ENCODE measurements at regions of chr6 and their contacts with region 1.

Region 1: DNA sequence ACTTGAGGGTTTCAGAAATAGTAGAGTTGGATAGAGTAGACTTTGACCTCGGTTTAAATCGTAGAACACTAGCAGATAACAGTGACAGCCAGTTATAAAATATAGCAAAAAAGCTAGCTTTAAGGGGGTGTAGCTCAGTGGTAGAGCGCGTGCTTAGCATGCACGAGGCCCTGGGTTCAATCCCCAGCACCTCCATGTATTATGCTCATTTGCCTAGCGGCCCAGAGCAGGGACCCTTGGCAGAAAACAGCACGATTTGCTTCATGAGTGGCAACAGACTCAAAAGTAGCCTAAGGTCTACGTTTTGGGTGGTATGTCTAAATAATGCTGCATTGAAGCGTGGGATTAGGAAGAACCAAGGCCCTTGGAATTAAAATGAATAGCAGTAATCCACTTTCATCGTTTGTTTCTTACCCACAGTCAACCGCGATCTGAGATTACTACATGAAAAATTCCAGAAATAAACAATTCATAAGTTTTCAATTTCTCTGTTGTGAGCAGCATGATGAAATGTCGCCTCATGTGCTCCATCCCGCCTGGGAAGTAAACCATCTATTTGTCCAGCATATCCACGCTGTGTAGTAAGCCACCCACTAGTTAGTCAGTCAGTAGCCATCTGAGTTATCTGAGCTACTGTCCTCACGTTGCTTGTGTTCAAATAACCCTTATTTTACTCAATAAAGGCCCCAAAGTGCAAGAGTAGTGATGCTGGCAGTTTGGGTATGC is 184.9 kb downstream of the GPX5 start:
- DNase-seq: peak; percentile 55 to 97 (median 68)
- ATAC-seq: peak; percentile 87
- H3K4me3 ChIP-seq: peak overlapping the region; percentile 51
- H3K27ac ChIP-seq: peak overlapping the region; percentile 89
- H3K4me1 ChIP-seq: peaks cover 0 to 16% of the 10 kb centered on the region in 2 experiments; a peak in 3 of 5 replicates
- H3K27me3 ChIP-seq: no peaks in the 10 kb centered on the region
- CTCF ChIP-seq: 0 out of 6 replicates have a peak, but pooled peaks of 1 of the 3 experiments have one; percentile 1
- EP300 ChIP-seq: peak; percentile 59
- POLR2A ChIP-seq: no peak
- RAD21 ChIP-seq: peak in 1 of 2 experiments; percentile 27; a peak in 1 of 4 replicates

Region 2: DNA sequence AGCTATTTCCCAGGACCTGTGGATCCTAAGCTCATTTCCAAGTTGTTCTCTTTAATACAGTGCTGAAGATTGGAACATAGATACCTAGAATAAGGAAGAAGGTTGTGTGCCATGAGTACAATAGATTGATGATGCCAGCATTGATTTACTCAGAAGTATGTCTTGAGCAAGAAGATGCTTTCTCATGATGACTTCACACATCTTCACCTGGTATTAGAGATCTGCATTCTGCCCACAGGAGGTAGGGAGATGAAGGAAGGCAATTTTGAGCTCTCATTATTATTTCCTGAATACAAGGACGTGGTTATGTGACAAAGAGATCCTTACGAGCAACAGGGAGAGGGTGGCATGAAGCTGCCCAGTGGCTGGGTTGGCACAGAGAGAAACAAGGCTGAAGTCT is 650.2 kb before region 1 on chr6:
- CTCF ChIA-PET with region 1: no interaction called
- POLR2A ChIA-PET with region 1: no interaction called
- in situ Hi-C with region 1: no loop called
- intact Hi-C with region 1: no loop called
- DNase-seq: no peak
- ATAC-seq: no peak
- H3K4me3 ChIP-seq: no peak overlapping the region
- H3K27ac ChIP-seq: no peak overlapping the region
- H3K4me1 ChIP-seq: no peaks in the 10 kb centered on the region; a peak in 1 of 5 replicates
- H3K27me3 ChIP-seq: no peaks in the 10 kb centered on the region
- CTCF ChIP-seq: no peak
- EP300 ChIP-seq: no peak
- POLR2A ChIP-seq: no peak
- RAD21 ChIP-seq: no peak

Region 3: GRCh38 chr6:28695715-28696114 is 14.9 kb before region 1 on chr6:
- CTCF ChIA-PET with region 1: no interaction called
- POLR2A ChIA-PET with region 1: interaction called, 12 read pairs
- in situ Hi-C with region 1: no loop called
- intact Hi-C with region 1: no loop called
- DNase-seq: no peak
- ATAC-seq: no peak
- H3K4me3 ChIP-seq: no peak overlapping the region
- H3K27ac ChIP-seq: no peak overlapping the region
- H3K4me1 ChIP-seq: peaks cover 6 to 7% of the 10 kb centered on the region in 2 experiments; a peak in 3 of 5 replicates
- H3K27me3 ChIP-seq: no peaks in the 10 kb centered on the region; a peak in 1 of 5 replicates
- CTCF ChIP-seq: no peak
- EP300 ChIP-seq: no peak
- POLR2A ChIP-seq: no peak
- RAD21 ChIP-seq: no peak

Region 4: DNA sequence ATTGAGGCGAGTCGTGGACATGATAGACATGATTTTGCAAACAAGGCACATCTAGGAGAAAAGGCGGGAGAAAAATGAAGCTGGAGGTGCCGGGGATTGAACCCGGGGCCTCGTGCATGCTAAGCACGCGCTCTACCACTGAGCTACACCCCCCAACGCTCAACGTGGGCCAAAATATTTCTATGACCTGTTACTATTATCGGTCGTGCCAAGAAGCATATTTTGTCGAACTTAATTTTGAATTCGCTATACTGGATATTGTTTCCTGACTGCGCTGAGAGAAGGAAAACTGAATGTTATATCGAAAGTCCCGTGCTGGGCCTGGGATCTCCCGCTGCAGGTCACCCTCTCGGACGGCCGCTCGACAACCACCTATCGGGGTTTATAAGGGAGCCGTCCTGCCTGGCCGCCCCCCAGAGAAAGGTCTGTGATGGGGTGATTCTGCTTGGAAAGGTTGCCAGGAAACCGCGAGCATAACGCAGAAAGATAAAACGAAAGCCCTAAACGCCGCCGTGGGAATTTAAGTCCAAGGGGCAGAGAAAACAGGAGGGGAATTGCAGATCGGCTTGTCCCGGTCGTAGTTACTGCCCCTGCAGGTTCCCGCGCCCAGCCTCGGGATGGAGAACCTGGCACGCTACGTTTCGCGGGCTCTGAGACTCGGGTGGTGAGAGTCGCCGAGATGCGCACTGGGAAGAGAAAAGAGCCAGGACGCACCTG is 153.1 kb after region 1 on chr6:
- CTCF ChIA-PET with region 1: no interaction called
- POLR2A ChIA-PET with region 1: no interaction called
- in situ Hi-C with region 1: no loop called
- intact Hi-C with region 1: no loop called
- DNase-seq: peak; percentile 64 to 92 (median 68)
- ATAC-seq: peak; percentile 72
- H3K4me3 ChIP-seq: peak overlapping the region; percentile 64
- H3K27ac ChIP-seq: peak overlapping the region; percentile 79
- H3K4me1 ChIP-seq: peaks cover 14 to 25% of the 10 kb centered on the region in 2 experiments; a peak in 4 of 5 replicates
- H3K27me3 ChIP-seq: no peaks in the 10 kb centered on the region
- CTCF ChIP-seq: 0 out of 6 replicates have a peak, but pooled peaks of 1 of the 3 experiments have one; percentile 61
- EP300 ChIP-seq: peak; percentile 76
- POLR2A ChIP-seq: peak; percentile 54; the same call in 1 of the 2 replicates
- RAD21 ChIP-seq: peak in 1 of 2 experiments; percentile 63; a peak in 3 of 4 replicates

Region 5: GRCh38 chr6:28947831-28948270 is 237.2 kb after region 1 on chr6:
- CTCF ChIA-PET with region 1: interaction called, 10 read pairs
- POLR2A ChIA-PET with region 1: no interaction called
- in situ Hi-C with region 1: no loop called
- intact Hi-C with region 1: no loop called
- DNase-seq: peak in 2 of 4 experiments; percentile 40 to 73
- ATAC-seq: peak; percentile 48
- H3K4me3 ChIP-seq: no peak overlapping the region
- H3K27ac ChIP-seq: peak overlapping the region; percentile 38; the same call in 2 of the 3 replicates
- H3K4me1 ChIP-seq: peaks cover 21 to 42% of the 10 kb centered on the region in 2 experiments; a peak in 4 of 5 replicates
- H3K27me3 ChIP-seq: no peaks in the 10 kb centered on the region
- CTCF ChIP-seq: no peak
- EP300 ChIP-seq: no peak
- POLR2A ChIP-seq: no peak
- RAD21 ChIP-seq: no peak